ENCODE measurements at regions of chr11 and their contacts with region 1.

Region 1: DNA sequence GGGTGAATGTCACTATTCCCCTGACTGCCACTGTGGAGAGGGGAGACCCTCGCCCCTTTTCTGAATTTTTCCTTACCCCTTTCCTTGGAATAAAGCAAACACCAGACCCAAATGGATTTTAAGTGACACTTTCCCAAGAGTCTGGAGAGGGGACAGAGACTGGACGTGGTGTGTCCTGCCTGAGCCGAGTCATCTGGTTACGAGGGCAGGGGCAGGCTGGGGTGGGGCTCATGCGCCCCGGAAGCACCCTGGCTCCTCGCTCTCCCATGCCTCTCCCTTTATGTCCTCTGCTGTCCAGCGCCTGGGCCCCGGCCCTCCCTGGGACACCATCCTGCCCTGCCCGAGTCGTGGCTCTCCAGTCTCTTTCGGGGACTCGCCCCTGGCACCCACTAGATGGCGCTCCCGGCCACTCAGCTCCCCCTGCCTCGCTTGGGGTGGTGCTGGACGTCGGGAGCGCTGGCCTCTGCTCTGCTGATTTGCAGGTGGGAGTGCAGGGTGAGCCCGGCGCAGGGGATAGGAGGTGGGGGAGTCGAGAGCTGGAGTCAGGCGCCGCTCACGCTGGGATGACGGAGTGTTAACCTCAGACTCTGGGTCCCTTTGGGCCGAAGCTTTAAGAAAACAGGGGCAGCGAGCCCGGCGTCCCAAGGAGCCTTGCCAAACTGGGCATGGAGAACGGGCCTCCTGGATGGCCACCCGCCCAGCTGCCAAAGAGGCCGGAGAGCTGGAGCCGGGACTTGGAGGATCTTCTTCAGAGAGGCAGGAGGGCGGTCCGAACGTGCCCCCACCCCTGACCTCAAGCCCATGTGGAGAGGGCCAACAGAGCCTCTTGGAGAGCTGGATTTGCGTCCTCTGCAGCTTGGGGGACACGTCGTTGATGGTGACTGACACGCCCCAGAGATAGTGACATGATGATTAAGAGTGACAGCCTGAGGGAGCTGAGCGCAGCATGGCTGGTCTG is 89.9 kb downstream of the RPS6KA4 start:
- DNase-seq: peak; percentile 92
- ATAC-seq: peak; percentile 83
- H3K4me3 Mint-ChIP-seq: peak overlapping the region; percentile 76
- H3K27ac Mint-ChIP-seq: no peak overlapping the region
- H3K4me1 Mint-ChIP-seq: peaks cover 18% of the 10 kb centered on the region
- H3K27me3 Mint-ChIP-seq: peaks cover 68% of the 10 kb centered on the region
- CTCF ChIP-seq: peak; percentile 69

Region 2: DNA sequence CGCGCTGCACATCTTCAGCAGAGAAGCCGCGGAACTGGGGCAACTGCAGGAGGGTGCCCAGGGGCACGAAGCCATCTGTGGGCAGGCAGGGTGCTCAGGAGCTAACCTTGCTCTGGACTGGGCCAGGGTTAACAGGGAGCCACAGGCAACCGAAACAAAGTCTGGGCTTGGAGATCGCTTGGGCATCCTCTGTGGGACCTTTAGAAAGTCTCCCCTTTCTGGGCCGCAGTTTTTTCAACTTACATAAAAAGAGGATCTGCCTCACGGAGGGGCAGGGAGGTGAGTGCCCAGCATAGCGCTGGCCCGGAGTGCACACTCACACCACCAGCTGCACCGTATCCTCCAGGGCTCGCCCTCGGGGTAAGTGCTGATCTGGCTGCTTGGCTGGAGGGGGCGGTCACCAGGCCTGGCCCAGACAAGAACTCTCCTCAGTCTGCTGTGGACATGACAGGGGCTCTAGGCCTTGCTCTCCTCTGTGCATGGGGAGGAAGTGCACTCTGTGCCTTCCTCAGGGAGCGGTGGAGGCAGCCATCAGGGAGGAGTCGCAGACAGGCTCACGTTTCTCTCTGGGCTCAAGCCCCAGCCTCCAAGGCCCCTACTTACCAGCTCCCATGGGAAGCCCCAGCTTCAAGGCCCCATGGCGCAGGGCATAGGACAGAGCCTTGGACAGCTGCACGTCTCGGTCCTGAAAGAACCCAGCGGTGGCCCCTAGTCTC is 223.8 kb before region 1 on chr11:
- CTCF ChIA-PET with region 1: no interaction called
- POLR2A ChIA-PET with region 1: no interaction called
- DNase-seq: no peak
- ATAC-seq: no peak
- H3K4me3 Mint-ChIP-seq: peak overlapping the region; percentile 81
- H3K27ac Mint-ChIP-seq: peak overlapping the region; percentile 57
- H3K4me1 Mint-ChIP-seq: peaks cover 23% of the 10 kb centered on the region
- H3K27me3 Mint-ChIP-seq: no peaks in the 10 kb centered on the region
- CTCF ChIP-seq: no peak

Region 3: GRCh38 chr11:64358907-64359711 is 89.8 kb before region 1 on chr11 and contains the start of gene RPS6KA4:
- CTCF ChIA-PET with region 1: interaction called, 134 read pairs
- POLR2A ChIA-PET with region 1: no interaction called
- DNase-seq: peak; percentile 49
- ATAC-seq: peak; percentile 49
- H3K4me3 Mint-ChIP-seq: peak within 1 kb of the TSS; percentile 80
- H3K27ac Mint-ChIP-seq: peak within 1 kb of the TSS; percentile 50
- H3K4me1 Mint-ChIP-seq: peaks cover 26% of the 10 kb centered on the region
- H3K27me3 Mint-ChIP-seq: no peaks in the 10 kb centered on the region
- CTCF ChIP-seq: no peak
- total RNA-seq, gene RPS6KA4: 16.8 to 18.3 TPM (median 18.3 TPM) in 3 replicates

Region 4: DNA sequence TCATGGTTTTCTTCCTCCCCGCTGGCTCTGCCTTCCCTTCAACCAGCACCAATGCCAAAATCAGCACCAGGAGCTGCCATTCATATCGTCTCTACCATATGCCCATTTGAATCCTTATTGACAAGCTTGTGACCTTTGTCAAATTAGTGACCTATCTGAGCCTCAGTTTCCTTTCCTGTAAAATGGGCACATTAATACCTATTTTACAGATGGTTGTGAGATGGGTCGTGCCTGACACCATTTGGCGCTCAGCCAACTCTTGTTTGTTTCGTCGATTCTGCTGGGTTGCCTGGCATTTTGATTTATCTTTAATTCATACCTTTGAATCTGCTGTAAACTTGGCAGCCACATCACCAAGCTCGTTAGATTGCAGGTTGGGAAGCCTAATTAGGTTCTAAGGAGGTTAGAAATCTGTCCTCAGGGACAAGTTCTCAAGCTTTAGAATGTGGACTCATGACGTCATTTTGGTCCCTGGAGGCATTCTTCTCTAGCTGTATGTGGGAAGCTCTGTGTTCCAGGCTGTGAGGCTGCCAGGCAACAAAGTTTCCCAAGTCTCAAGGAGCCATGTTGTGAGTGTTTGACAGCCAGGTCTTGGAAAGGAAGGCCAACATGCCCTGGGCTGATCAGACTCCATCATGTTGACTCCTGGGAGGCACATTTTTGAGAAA is 28.9 kb before region 1 on chr11:
- CTCF ChIA-PET with region 1: interaction called, 23 read pairs
- POLR2A ChIA-PET with region 1: no interaction called
- DNase-seq: no peak
- ATAC-seq: no peak
- H3K4me3 Mint-ChIP-seq: no peak overlapping the region
- H3K27ac Mint-ChIP-seq: no peak overlapping the region
- H3K4me1 Mint-ChIP-seq: peaks cover 6% of the 10 kb centered on the region
- H3K27me3 Mint-ChIP-seq: peaks cover 52% of the 10 kb centered on the region
- CTCF ChIP-seq: no peak

Region 5: DNA sequence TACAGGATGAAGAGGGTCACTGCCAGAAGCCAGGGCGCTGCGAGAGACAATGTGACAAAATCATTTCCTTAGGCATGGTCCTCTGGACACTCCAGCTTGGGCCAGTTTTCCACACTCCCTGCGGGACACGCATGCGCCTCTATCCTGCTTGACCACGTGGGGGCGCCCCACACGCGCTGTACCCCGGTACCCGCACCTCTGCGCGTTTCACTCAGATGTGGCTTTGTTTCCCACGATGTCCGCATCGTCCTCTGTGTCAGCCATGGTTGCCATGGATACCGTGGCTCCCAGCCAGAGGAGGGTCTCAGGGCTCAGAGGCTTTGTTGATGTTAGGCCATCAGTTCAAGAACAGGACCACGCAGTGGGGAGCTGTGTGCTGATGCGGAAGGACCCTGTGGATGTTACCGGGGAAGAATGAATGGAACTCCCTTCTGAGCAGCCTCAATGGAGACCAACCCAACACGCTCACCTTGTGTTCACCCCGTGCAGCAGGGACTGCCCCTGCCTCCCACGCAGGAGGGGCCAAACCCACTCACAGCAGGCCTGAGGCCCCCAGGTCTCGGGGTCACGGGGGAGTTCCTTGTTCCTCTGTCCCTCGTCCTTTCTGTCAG is 41.1 kb after region 1 on chr11:
- CTCF ChIA-PET with region 1: interaction called, 45 read pairs
- POLR2A ChIA-PET with region 1: no interaction called
- DNase-seq: peak; percentile 84
- ATAC-seq: peak; percentile 93
- H3K4me3 Mint-ChIP-seq: no peak overlapping the region
- H3K27ac Mint-ChIP-seq: no peak overlapping the region
- H3K4me1 Mint-ChIP-seq: 0 out of 2 replicates have a peak, but pooled peaks cover 3% of the 10 kb centered on the region
- H3K27me3 Mint-ChIP-seq: peaks cover 51% of the 10 kb centered on the region
- CTCF ChIP-seq: peak; percentile 85

Region 6: DNA sequence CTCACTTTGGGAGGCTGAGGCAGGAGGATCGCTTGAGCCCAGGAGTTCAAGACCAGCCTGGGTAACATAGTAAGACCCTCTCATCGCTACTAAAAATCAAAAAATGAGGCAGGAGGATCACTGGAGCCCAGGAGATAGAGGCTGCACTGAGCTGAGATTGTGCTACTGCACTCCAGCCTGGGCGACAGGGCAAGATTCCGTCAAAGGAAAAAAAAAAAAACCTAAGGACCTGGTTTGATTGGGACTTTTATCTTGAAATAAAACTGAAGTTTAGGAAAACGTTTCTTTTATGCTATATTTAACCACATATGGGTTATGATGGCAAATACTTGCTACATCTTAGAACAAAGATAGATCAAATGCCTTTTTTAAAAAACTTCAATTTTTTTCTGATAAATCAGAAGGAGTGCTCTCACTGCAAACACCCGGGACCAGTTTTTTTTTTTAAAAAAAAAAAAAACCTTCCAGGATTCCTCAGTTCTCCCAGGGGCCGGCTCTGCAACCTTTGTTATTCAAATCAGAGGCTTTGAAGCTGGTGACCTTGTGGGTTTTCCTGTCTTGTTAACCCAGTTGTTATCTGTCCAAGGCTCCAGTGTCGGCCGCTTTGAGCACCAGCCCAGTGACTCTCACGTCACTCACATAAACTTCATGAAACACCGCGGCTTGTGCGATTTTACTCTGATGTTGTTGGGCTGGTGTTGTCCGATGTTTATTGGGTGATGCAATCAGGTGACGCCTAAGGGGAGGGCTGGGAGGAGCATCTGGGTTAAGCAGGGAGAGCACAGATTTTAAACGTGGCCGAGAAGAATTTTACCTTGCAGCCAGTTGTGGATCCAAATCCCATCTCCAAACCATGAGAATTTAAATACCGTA is 117.4 kb after region 1 on chr11:
- CTCF ChIA-PET with region 1: interaction called, 33 read pairs
- POLR2A ChIA-PET with region 1: no interaction called
- DNase-seq: peak; percentile 59
- ATAC-seq: peak; percentile 45
- H3K4me3 Mint-ChIP-seq: peak overlapping the region; percentile 64
- H3K27ac Mint-ChIP-seq: peak overlapping the region; percentile 99
- H3K4me1 Mint-ChIP-seq: peaks cover 28% of the 10 kb centered on the region
- H3K27me3 Mint-ChIP-seq: no peaks in the 10 kb centered on the region
- CTCF ChIP-seq: no peak

Region 7: DNA sequence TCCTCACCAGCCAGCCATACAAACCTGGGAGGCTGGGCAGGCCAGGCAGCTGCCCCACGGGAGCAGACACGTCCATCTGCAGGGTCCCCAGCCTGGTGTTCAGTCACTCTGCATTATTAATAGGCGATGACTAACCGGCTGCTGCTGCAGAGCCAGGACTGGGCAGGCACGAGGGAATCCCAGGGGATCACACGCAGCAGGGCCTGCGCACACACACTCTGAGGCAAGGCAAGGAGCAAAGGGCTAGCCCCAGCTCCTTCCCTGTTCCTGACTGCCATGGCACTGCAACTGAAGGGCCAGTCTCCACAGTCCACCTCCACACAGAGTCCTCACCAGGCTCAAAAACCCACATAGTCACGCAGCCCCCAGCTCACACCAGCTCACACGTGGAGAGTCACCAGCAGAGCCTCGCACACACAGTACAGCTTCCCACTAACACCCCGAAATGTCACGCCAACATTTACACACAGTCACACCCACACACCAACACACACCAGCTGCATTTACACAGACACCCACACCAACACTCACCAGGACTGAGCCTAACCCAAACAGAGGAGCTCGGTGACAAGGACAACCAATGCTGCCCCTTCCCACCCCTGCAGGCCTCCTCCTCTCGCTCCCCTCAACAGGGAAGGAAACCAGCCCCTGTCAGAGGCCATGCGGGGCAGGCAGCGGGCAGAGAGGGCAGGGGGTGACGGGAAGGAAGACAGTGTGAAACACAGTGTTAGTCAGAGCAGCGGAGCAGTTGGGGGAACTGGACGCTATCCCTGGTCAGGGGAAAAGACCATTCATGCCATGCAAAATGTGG is 226.8 kb after region 1 on chr11:
- CTCF ChIA-PET with region 1: interaction called, 11 read pairs
- POLR2A ChIA-PET with region 1: no interaction called
- DNase-seq: no peak
- ATAC-seq: no peak
- H3K4me3 Mint-ChIP-seq: no peak overlapping the region
- H3K27ac Mint-ChIP-seq: no peak overlapping the region
- H3K4me1 Mint-ChIP-seq: no peaks in the 10 kb centered on the region
- H3K27me3 Mint-ChIP-seq: peaks cover 65% of the 10 kb centered on the region
- CTCF ChIP-seq: no peak

Measured in WTC11 (cell line).